ENCODE measurements at regions of chr5 and their contacts with region 1.

Region 1: DNA sequence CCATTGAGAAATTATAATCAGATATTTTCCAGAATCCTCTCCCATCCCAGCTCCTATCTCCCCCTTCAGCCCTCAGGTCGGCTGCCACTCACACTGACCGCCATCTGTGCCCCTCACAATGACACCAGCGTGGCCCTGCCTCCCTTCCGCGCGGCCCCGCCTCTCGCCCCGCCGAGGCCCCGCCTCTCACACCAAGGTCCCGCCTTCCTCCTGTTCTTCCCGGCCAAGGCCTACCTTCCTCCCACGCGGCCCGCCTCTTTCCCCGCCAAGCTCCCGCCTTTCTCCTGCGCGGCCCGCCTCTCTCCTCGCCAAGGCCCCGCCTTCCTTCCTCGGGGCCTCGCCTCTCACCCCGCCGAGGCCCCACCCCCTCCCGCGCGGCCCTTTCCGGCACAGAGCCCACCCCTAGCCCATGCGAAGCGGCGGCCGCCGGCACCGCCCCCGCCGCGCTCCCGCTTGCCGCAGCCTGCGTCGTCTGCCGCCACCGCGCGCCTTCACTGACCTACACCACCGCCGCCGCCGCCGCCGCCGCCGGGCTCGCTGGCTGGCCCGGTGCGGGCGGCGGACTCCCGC is at the start of gene DNAJC21:
- DNase-seq: peak; percentile 87 to 97
- ATAC-seq: peak; percentile 90 to 95
- H3K4me3 ChIP-seq: peak within 1 kb of the TSS; percentile 79
- H3K27ac ChIP-seq: peak within 1 kb of the TSS; percentile 84 to 93
- H3K4me1 ChIP-seq: peaks cover 19% of the 10 kb centered on the region
- CTCF ChIP-seq: no peak
- EP300 ChIP-seq: no peak
- POLR2A ChIP-seq: no peak
- RAD21 ChIP-seq: no peak
- polyA plus RNA-seq, gene DNAJC21: 21.5 and 36.5 TPM in 2 replicates

Region 2: GRCh38 chr5:34941936-34942335 is 12.7 kb after region 1 on chr5:
- CTCF ChIA-PET with region 1: interaction called, 4 read pairs
- POLR2A ChIA-PET with region 1: interaction called, 17 read pairs
- DNase-seq: no peak
- ATAC-seq: no peak
- H3K4me3 ChIP-seq: no peak overlapping the region
- H3K27ac ChIP-seq: no peak overlapping the region
- H3K4me1 ChIP-seq: no peaks in the 10 kb centered on the region
- CTCF ChIP-seq: no peak
- EP300 ChIP-seq: no peak
- POLR2A ChIP-seq: no peak
- RAD21 ChIP-seq: no peak

Measured in A549 (cell line).